HEK293T (cell line): ENCODE measurements at regions of chr2 and their contacts with region 1.

Region 1: GRCh38 chr2:170815746-170816503 is 762 bp upstream of the GAD1 start:
- DNase-seq: peak; percentile 83

Region 2: DNA sequence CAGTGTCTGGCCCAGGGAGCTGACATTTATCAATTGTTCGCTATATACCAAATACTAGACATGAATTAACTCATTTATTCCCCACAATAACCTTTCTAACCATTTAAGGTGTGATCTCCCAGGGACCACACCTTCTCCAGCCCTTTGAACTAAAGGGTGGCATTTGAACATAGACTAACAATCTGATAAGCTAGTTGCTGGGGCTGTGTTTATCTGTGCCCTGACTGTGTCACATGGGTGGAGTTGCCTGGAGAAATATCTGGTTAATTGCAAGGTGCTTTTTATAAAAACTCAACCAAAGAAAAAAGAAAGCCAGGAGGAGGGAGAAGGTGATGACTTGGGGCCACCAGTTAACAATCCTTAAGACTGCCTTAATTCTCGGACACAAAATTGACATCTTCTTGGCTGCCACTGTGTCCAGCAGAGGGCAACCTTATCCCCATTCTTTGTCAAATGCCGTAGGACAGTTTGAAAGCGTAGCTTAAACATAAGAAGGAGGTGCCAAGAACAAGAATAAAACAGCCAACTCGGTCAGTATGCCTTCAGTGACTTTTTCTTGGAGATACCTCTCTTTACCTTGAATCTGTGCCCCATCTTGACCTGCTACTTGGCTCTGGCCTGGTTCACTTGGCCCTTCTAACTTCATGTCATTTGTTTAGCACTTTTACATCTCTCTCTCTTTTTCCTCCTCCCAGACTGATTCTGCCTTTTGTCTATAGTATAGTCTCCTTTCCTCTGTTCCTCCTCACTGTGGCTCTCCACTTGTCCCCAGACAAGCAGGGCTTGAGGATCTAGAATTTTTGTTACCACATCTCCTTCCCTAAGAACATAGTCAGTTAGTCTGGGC is 454.6 kb before region 1 on chr2:
- CTCF ChIA-PET with region 1: interaction called, 13 read pairs
- POLR2A ChIA-PET with region 1: interaction called, 4 read pairs
- DNase-seq: peak; percentile 53

Region 3: GRCh38 chr2:170369894-170370293 is 446.0 kb before region 1 on chr2:
- CTCF ChIA-PET with region 1: interaction called, 15 read pairs
- POLR2A ChIA-PET with region 1: interaction called, 5 read pairs
- DNase-seq: peak; percentile 18

Region 4: GRCh38 chr2:170409164-170409535 is 406.8 kb before region 1 on chr2:
- CTCF ChIA-PET with region 1: interaction called, 22 read pairs
- POLR2A ChIA-PET with region 1: no interaction called
- DNase-seq: peak; percentile 69

Region 5: GRCh38 chr2:170896622-170897021 is 80.7 kb after region 1 on chr2:
- CTCF ChIA-PET with region 1: no interaction called
- POLR2A ChIA-PET with region 1: no interaction called
- DNase-seq: no peak

Region 6: DNA sequence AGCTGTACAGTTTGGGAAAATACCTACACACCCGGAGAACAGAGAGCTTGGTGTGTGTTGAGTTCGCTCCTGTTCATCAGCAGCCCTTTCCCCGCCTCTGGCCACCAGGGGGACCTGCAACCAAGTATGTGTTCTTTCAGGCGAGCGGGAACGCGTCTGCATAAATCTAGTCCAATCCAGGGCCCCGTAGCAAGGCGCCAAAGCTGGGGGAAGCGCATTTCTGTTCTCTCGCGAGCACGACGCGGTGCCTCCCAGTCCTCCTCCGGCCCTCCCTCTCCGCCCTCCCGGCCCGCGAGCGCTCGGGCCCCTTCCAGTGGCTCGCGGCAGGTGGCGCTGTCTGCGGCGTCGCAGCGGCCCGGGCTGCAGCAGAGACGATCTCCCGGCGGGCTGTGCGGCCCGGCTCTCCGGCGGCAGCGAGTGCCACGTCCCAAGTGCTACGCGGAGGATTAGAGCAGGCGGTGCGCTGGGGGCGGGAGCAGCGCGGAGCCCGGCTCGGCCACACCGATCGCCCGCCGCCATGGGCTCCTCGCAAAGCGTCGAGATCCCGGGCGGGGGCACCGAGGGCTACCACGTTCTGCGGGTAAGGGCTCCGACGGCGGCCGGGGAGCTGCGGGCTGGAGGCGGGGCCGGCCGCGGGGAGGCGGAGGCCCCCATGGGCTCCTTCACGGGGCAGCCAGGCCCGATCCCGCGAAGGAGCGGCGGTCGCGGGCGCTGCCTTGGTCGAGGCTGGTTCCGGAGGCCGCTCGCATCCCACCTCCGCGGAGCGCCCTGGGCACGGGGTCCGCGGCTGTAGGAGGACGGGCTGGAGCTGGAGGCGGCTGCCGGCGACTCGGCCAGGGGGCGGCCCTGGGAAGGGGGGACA is 113.1 kb after region 1 on chr2 and contains the start of gene GORASP2:
- CTCF ChIA-PET with region 1: no interaction called
- POLR2A ChIA-PET with region 1: no interaction called
- DNase-seq: peak; percentile 96

Region 7: GRCh38 chr2:171307560-171307959 is 491.6 kb after region 1 on chr2:
- CTCF ChIA-PET with region 1: no interaction called
- POLR2A ChIA-PET with region 1: no interaction called
- DNase-seq: no peak